ENCODE measurements at regions of chr20 and their contacts with region 1.

Region 1: GRCh38 chr20:63580796-63581461 is 6.9 kb upstream of the HELZ2 start:
- DNase-seq: peak; percentile 79
- H3K4me3 ChIP-seq: no peak overlapping the region
- H3K27ac ChIP-seq: no peak overlapping the region
- H3K4me1 ChIP-seq: no peaks in the 10 kb centered on the region
- H3K27me3 ChIP-seq: no peaks in the 10 kb centered on the region
- CTCF ChIP-seq: peak; percentile 81 to 83

Region 2: DNA sequence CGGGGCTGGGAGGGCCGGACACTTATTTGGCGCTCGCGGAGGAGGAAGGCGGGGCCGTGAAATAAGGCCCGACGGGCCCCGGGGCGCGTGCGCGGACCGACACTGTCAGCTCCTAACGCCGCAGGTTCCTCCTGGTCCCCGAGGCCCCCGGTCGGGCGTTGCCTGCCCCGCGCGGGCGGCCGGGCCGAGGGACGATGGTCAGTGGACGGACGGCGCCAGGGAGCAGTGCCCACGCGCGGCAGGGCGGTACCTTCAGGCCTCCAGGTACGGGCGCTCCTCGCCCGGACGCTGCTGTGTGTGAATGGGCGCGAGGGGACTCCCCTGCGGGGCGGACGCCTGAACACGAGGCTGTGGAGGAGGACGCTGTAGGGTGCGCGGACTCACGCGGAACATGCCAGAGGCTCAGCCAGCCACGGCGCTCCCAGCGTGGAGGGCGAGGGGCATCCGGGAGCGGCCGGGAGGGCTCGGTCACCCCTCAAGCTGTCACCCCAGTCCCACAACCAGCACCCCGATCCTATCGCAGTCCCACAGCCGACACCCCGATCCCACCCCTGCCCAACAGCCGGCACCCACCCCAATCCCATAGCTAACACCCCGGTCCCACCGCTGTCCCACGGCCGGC is 46.3 kb after region 1 on chr20:
- CTCF ChIA-PET with region 1: no interaction called
- dilution Hi-C with region 1: no loop called
- in situ Hi-C with region 1: no loop called
- intact Hi-C with region 1: loop called (anchors 5 kb)
- DNase-seq: peak; percentile 94
- H3K4me3 ChIP-seq: peak overlapping the region; percentile 93 to 99 (median 97)
- H3K27ac ChIP-seq: peak overlapping the region; percentile 62
- H3K4me1 ChIP-seq: peaks cover 11% of the 10 kb centered on the region
- H3K27me3 ChIP-seq: no peaks in the 10 kb centered on the region
- CTCF ChIP-seq: no peak

Region 3: DNA sequence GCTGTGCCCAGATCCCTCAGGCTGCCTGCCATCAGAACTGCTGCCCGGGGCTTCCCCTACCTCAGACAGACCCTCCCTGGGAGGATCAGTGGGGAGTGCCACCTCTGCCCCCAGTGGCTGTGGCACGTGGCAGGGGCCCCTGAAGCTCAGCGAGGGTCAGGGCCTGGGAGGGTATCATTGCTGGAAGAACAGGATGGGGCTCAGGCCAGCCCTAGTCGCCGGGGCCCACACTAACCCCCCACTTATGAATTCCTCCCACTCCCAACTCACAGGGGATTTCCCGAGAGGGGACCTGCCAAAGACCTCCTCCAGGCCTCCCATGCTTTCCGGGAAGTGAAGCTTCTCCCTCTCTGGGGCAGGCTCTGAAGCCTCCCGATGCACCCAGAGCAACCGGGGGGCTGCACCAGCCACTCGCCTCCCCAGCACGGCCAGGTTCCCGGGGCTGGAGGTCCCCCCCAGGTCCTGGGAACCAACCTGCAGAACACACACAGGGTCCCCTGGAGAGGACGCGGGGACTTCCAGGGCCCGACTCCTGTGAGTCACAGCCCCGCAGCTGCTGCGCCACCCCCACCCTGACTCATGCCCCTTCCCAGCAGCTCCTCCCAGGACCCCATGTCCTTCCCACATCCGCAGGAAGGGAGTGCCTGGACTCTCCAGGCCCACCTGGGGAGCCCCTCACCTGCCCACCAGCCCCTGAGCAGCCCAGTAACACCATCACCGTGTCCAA is 118.0 kb after region 1 on chr20:
- CTCF ChIA-PET with region 1: no interaction called
- dilution Hi-C with region 1: no loop called
- in situ Hi-C with region 1: no loop called
- intact Hi-C with region 1: loop called (anchors 5 kb)
- DNase-seq: peak; percentile 94
- H3K4me3 ChIP-seq: peak overlapping the region; percentile 47 to 72 (median 47)
- H3K27ac ChIP-seq: peak overlapping the region; percentile 60
- H3K4me1 ChIP-seq: peaks cover 72% of the 10 kb centered on the region
- H3K27me3 ChIP-seq: no peaks in the 10 kb centered on the region
- CTCF ChIP-seq: no peak

Region 4: DNA sequence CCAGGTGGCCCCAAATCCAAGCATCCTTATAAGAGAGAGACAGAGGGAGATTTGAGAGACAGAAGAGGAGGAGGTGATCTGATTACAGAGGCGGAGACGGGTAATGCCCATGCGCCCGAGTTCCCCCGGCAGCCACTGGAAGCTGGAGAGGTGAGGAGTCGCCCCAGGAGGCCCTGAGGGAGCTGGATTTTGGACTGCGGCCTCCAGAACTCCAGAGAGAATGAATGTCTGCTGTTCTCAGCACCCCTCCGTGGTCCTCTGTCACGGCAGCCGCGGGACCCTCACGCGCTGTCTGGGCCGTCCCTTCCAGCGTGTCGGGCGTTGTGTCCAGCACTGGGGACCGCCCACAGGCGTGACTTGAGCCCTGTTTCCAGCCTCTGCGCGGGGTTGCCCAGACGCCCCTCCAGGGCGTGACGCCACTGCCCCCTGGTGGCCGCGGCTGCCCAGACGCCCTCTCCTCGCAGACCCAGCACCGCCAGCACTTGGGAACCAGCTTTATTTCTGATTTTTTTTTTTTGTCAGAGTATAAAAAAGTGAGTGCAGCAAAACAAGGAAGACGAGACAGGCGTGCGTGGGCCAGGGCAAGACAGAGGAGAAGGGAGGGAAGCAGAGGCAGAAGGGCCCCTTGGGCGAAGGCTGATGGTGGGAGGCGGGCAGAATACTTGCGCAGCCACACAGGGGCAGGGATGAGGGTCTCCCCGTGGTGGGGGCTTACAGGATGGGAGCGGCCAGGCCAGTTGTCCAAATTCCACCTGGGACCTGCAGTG is 392.9 kb after region 1 on chr20:
- CTCF ChIA-PET with region 1: no interaction called
- dilution Hi-C with region 1: no loop called
- in situ Hi-C with region 1: no loop called
- intact Hi-C with region 1: loop called (anchors 1 kb)
- DNase-seq: peak; percentile 65
- H3K4me3 ChIP-seq: peak overlapping the region in 2 of 3 experiments; percentile 41 to 47
- H3K27ac ChIP-seq: no peak overlapping the region
- H3K4me1 ChIP-seq: peaks cover 25% of the 10 kb centered on the region
- H3K27me3 ChIP-seq: no peaks in the 10 kb centered on the region
- CTCF ChIP-seq: peak; percentile 89 to 97

Region 5: GRCh38 chr20:64119681-64120341 is 538.9 kb after region 1 on chr20:
- CTCF ChIA-PET with region 1: no interaction called
- dilution Hi-C with region 1: no loop called
- in situ Hi-C with region 1: no loop called
- intact Hi-C with region 1: loop called (anchors 2 kb)
- DNase-seq: no peak
- H3K4me3 ChIP-seq: no peak overlapping the region
- H3K27ac ChIP-seq: no peak overlapping the region
- H3K4me1 ChIP-seq: no peaks in the 10 kb centered on the region
- H3K27me3 ChIP-seq: no peaks in the 10 kb centered on the region
- CTCF ChIP-seq: no peak

Measured in mammary epithelial cell (primary cell).